ENCODE measurements at regions of chr11 and their contacts with region 1.

Region 1: GRCh38 chr11:6612213-6613041 is at the start of gene TAF10:
- DNase-seq: peak; percentile 93 to 97 (median 95)
- H3K4me3 ChIP-seq: peak within 1 kb of the TSS; percentile 66 to 88
- H3K4me3 Mint-ChIP-seq: peak within 1 kb of the TSS; percentile 87 to 94 (median 91)
- H3K27ac ChIP-seq: peak within 1 kb of the TSS; percentile 87
- H3K27ac Mint-ChIP-seq: peak within 1 kb of the TSS in 6 of 7 donors; percentile 95 to 97 (median 97)
- H3K4me1 ChIP-seq: peaks cover 51% of the 10 kb centered on the region
- H3K4me1 Mint-ChIP-seq: peaks cover 6 to 36% (median 28%) of the 10 kb centered on the region in 4 donors
- H3K27me3 ChIP-seq: no peaks in the 10 kb centered on the region
- H3K27me3 Mint-ChIP-seq: no peaks in the 10 kb centered on the region
- total RNA-seq, gene TAF10: 116 to 120 TPM

Region 2: GRCh38 chr11:6419009-6419631 is 193.3 kb before region 1 on chr11 and contains the start of gene APBB1:
- CTCF ChIA-PET with region 1: interaction called, 3 read pairs
- POLR2A ChIA-PET with region 1: interaction called, 4 read pairs
- intact Hi-C with region 1: loop called (anchors 10 kb)
- DNase-seq: peak; percentile 67 to 81 (median 79)
- H3K4me3 ChIP-seq: peak within 1 kb of the TSS; percentile 43 to 74
- H3K4me3 Mint-ChIP-seq: peak within 1 kb of the TSS in 6 of 8 donors; percentile 81 to 89 (median 86)
- H3K27ac ChIP-seq: peak within 1 kb of the TSS; percentile 73
- H3K27ac Mint-ChIP-seq: peak within 1 kb of the TSS; percentile 74 to 90 (median 84)
- H3K4me1 ChIP-seq: peaks cover 50% of the 10 kb centered on the region
- H3K4me1 Mint-ChIP-seq: peaks cover 5 to 12% (median 8%) of the 10 kb centered on the region in 4 donors
- H3K27me3 ChIP-seq: no peaks in the 10 kb centered on the region
- H3K27me3 Mint-ChIP-seq: peaks cover 6 to 15% of the 10 kb centered on the region in 2 donors
- total RNA-seq, gene APBB1: 93.2 to 93.5 TPM

Region 3: DNA sequence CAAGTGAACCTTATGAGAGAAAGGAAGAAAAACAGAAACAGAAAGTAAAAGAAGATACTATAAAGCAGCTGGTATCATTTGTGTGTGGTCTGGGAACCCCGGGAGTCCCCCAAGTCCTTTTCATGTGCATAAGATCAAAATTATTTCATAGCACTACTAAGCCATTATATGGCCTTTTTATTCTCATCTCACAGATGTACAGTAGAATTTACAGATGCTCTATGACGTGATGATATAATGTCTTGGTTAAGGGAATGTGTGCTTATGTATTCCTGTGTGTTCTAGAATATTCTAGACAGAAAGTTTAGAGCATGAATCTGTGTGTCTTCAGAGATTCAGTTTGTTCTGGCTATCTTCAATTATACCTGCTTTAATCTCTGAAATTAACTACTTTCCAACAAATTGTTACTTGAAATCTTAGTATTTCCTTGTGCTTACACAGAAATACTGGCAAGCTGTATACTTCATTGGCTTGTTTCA is 15.4 kb after region 1 on chr11:
- CTCF ChIA-PET with region 1: interaction called, 17 read pairs
- POLR2A ChIA-PET with region 1: interaction called, 27 read pairs
- intact Hi-C with region 1: no loop called
- DNase-seq: peak in 3 of 5 donors; percentile 25 to 33 (median 26)
- H3K4me3 ChIP-seq: no peak overlapping the region
- H3K4me3 Mint-ChIP-seq: peak overlapping the region; percentile 10 to 75 (median 52)
- H3K27ac ChIP-seq: peak overlapping the region; percentile 3
- H3K27ac Mint-ChIP-seq: peak overlapping the region; percentile 18 to 95 (median 48)
- H3K4me1 ChIP-seq: peaks cover 15% of the 10 kb centered on the region
- H3K4me1 Mint-ChIP-seq: peaks cover 8 to 19% (median 13%) of the 10 kb centered on the region in 4 donors
- H3K27me3 ChIP-seq: no peaks in the 10 kb centered on the region
- H3K27me3 Mint-ChIP-seq: no peaks in the 10 kb centered on the region

Region 4: DNA sequence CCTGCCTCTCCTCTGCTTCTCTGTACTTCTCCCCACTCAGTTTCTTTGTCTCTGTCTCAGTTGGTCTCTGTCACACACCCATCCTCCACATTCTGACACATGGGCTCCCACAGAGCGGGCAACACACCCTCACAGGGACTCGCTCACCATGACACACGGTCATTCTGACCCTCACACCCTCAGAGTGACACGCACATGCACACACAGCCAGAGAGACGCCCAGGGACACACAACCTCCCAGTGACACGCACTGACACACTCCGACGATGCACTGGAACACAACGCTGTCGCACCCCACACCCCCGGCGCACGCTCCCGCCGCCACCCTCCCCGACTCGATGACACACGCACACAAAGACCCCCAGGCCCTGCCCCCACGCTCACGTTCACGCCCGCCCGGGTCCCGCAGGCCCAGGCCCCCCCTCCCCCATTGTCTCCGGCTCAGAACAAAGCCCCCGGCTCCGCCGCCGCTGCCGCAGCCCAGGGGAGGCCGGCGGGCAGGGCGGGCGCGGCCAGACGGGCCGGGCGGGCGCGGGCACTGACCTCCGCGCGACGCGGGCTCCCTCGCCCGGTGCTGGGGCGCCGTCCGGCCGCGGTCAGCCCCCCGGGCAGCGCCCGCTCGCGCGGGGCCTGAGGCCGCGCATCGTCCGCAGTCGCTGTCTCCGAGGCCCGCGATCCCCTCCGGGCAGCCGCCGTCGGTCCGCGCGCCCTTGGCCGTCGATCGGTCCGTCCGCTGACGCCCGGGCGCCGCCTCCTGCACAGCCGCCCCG is 42.8 kb after region 1 on chr11:
- CTCF ChIA-PET with region 1: interaction called, 8 read pairs
- POLR2A ChIA-PET with region 1: interaction called, 21 read pairs
- intact Hi-C with region 1: no loop called
- DNase-seq: peak in 1 of 5 donors; percentile 50
- H3K4me3 ChIP-seq: peak overlapping the region in 1 of 2 donors; percentile 3
- H3K4me3 Mint-ChIP-seq: no peak overlapping the region
- H3K27ac ChIP-seq: no peak overlapping the region
- H3K27ac Mint-ChIP-seq: no peak overlapping the region
- H3K4me1 ChIP-seq: peaks cover 25% of the 10 kb centered on the region
- H3K4me1 Mint-ChIP-seq: peaks cover 0 to 8% (median 1%) of the 10 kb centered on the region in 4 donors
- H3K27me3 ChIP-seq: peaks cover 7% of the 10 kb centered on the region
- H3K27me3 Mint-ChIP-seq: peaks cover 0 to 2% of the 10 kb centered on the region in 2 donors

Region 5: DNA sequence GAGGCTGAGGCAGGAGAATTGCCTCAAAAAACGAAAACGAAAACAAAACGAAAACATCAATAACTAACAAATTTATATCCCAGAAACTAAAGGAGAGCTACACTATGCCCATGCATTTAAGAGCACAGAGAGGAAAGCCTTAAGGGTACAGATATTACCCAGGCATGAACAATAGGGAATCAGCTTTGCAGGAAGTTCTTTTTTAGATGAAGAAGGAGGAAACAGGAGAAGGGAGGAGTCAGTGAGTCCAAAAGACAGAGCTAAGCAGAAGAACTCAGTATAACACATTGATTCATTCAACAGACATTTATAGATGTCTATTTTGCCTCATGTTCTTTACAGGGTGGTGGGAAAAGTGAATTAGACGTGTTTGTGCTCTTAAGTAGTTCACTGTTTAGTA is 62.4 kb after region 1 on chr11:
- CTCF ChIA-PET with region 1: interaction called, 39 read pairs
- POLR2A ChIA-PET with region 1: interaction called, 172 read pairs
- intact Hi-C with region 1: no loop called
- DNase-seq: no peak
- H3K4me3 ChIP-seq: no peak overlapping the region
- H3K4me3 Mint-ChIP-seq: peak overlapping the region in 2 of 8 donors; percentile 26 to 82
- H3K27ac ChIP-seq: no peak overlapping the region
- H3K27ac Mint-ChIP-seq: peak overlapping the region in 1 of 7 donors; percentile 5
- H3K4me1 ChIP-seq: peaks cover 53% of the 10 kb centered on the region
- H3K4me1 Mint-ChIP-seq: peaks cover 43 to 70% (median 55%) of the 10 kb centered on the region in 4 donors
- H3K27me3 ChIP-seq: no peaks in the 10 kb centered on the region
- H3K27me3 Mint-ChIP-seq: no peaks in the 10 kb centered on the region